Heart right ventricle (tissue), 16 donors: ENCODE measurements at regions of chr14 and their contacts with region 1.

Region 1: DNA sequence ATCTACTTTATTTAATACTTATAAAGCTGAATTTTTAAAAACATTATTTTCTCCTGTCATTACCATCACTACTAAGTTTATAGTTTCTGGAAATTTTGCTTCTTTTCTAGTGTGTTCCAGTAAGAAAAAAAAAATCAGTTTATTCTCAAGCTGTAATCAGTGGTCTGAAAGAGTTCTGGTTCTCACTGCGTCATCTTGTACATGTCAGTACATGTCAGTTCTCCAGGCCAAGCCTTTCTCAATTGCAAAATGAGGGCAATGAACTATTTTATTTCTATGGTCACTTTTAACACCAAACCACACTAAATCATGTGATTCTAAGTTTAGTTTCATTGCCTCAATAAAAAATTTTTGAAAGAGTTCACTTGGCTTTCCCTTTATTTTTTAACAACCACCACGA is 468.9 kb upstream of the LRFN5 start:
- DNase-seq: no peak
- ATAC-seq: no peak
- H3K4me3 ChIP-seq: no peak overlapping the region
- H3K27ac ChIP-seq: no peak overlapping the region
- H3K4me1 ChIP-seq: no peaks in the 10 kb centered on the region
- H3K27me3 ChIP-seq: no peaks in the 10 kb centered on the region
- CTCF ChIP-seq: no peak

Region 2: DNA sequence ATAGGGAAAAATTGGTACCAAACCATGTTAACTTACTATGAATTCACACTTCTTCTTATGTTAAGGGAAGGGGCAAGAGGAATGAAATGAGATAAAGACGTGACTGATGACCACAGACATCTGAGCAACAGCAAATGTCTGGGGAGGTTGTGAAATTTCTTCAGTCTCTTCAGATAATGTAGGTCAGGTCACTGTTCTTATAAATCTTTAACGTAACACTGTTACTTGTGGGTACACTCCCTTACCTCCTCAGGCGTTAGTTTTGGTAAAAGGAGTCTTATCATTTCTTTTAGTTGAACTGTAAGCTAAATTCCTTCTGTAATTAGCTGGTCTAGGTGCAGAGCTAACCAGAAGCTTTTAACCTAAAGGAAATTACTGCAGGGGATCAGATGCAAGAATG is 64.0 kb after region 1 on chr14:
- intact Hi-C with region 1: loop called in 2 of 10 experiments (anchors 2 to 5 kb)
- DNase-seq: no peak
- ATAC-seq: no peak
- H3K4me3 ChIP-seq: no peak overlapping the region
- H3K27ac ChIP-seq: no peak overlapping the region
- H3K4me1 ChIP-seq: no peaks in the 10 kb centered on the region
- H3K27me3 ChIP-seq: no peaks in the 10 kb centered on the region
- CTCF ChIP-seq: no peak

Region 3: GRCh38 chr14:41349289-41349900 is 211.7 kb after region 1 on chr14:
- intact Hi-C with region 1: no loop called
- DNase-seq: no peak
- ATAC-seq: no peak
- H3K4me3 ChIP-seq: no peak overlapping the region
- H3K27ac ChIP-seq: no peak overlapping the region
- H3K4me1 ChIP-seq: no peaks in the 10 kb centered on the region
- H3K27me3 ChIP-seq: no peaks in the 10 kb centered on the region
- CTCF ChIP-seq: no peak